Common myeloid progenitor, CD34-positive (primary cell): ENCODE measurements at regions of chr17 and their contacts with region 1.

Region 1: GRCh38 chr17:7844292-7845154 is 10.3 kb upstream of the TMEM88 start:
- DNase-seq: peak; percentile 88 to 91 (median 90)
- H3K4me3 ChIP-seq: peak overlapping the region; percentile 59 to 90 (median 78)
- H3K27ac ChIP-seq: peak overlapping the region; percentile 94 to 96
- H3K4me1 ChIP-seq: peaks cover 11 to 55% (median 53%) of the 10 kb centered on the region in 4 experiments
- H3K27me3 ChIP-seq: no peaks in the 10 kb centered on the region

Region 2: DNA sequence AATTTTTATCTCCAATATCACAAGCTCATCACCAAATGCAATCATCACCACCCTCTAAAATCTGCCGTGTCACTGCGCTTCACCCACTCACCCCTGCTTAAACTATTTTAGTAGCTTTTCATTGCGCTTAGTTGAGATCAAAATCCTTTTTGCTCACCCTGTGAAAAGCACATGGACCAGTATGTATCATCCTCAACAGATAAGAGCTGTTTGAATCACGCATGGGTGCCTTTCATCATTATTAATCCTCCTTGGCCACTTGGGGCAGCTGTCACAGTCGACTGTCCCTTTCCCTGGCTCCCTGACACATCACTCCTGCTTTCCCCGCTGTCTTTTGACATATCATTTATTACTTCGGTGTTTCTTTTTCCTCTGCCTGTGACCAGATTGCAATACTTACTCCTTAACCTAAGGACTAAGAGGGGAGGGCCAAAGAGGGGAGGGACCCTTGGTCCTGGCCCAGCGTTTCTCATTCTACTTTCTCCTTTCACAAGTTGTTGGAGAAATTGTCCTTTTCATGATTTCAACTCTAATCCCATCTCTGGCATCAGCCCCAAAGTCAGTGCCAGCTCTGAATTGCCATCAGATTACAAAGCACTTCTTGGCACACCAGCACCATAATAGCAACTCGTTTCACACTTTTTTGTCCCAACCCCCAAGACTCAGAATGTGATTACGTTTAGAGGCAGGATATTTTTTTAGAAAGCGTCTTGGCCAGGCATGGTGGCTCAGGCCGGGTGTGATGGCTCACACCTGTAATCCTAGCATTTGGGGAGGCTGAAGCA is 19.1 kb before region 1 on chr17:
- CTCF ChIA-PET with region 1: interaction called, 10 read pairs
- POLR2A ChIA-PET with region 1: interaction called, 12 read pairs
- DNase-seq: peak in 1 of 3 donors; percentile 15
- H3K4me3 ChIP-seq: no peak overlapping the region
- H3K27ac ChIP-seq: no peak overlapping the region
- H3K4me1 ChIP-seq: no peaks in the 10 kb centered on the region
- H3K27me3 ChIP-seq: peaks cover 0 to 2% (median 0%) of the 10 kb centered on the region in 5 experiments

Region 3: DNA sequence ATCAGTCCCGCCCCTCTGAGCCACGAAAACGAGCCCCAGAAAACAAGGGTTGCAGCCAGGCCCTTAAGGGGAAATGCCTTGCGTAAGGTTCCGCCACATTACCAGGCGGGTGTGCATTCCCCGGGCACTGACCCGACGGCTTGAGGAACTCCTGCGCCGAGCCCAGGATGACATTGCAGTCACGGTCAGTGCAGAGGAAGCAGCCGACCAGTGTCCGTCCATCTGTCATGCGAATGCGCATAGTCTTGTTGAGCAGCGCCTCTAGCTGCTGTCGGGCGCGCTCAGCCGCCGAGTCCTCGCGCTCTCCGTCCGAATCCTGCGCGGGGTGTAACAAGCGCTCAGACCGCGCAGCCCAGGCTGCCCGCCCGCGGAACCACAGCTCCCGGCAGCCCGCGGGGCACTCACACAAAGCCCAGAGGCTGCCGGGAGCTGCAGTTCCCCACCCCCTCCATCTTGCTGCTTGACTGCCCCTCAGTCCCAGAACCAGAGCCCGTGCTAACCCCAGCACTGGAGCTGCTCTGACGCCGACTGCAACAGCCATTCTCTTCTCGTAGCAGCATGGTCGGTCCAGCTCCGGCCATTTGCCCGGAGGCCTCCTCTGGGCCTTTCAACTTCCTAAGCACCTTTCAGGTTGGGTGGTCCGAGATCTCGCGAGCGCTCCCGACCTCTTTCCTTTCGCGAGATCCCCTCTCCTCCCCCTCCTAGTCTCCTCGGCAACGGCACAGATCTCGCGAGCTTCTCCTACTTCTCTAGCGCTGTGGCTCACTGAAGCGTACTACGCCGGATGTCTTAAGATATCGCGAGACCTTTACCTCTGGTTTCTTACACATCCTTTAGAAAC is 12.6 kb after region 1 on chr17 and contains the start of gene NAA38:
- CTCF ChIA-PET with region 1: interaction called, 29 read pairs
- POLR2A ChIA-PET with region 1: interaction called, 31 read pairs
- DNase-seq: peak; percentile 99 to 100 (median 100)
- H3K4me3 ChIP-seq: peak within 1 kb of the TSS; percentile 56 to 93 (median 86)
- H3K27ac ChIP-seq: peak within 1 kb of the TSS; percentile 88 to 93
- H3K4me1 ChIP-seq: peaks cover 5 to 42% (median 38%) of the 10 kb centered on the region in 4 experiments
- H3K27me3 ChIP-seq: no peaks in the 10 kb centered on the region

Region 4: GRCh38 chr17:7940034-7940433 is 95.5 kb after region 1 on chr17:
- CTCF ChIA-PET with region 1: no interaction called
- POLR2A ChIA-PET with region 1: no interaction called
- DNase-seq: no peak
- H3K4me3 ChIP-seq: no peak overlapping the region
- H3K27ac ChIP-seq: no peak overlapping the region
- H3K4me1 ChIP-seq: no peaks in the 10 kb centered on the region
- H3K27me3 ChIP-seq: no peaks in the 10 kb centered on the region